ENCODE measurements at regions of chr11 and their contacts with region 1.

Region 1: GRCh38 chr11:92286709-92287108 is 62.1 kb downstream of the FAT3 start:
- DNase-seq: no peak
- ATAC-seq: no peak
- H3K4me3 ChIP-seq: no peak overlapping the region
- H3K27ac ChIP-seq: no peak overlapping the region
- H3K4me1 ChIP-seq: no peaks in the 10 kb centered on the region
- H3K27me3 ChIP-seq: peaks cover 11% of the 10 kb centered on the region; the same call in 1 of the 2 replicates
- CTCF ChIP-seq: no peak

Region 2: DNA sequence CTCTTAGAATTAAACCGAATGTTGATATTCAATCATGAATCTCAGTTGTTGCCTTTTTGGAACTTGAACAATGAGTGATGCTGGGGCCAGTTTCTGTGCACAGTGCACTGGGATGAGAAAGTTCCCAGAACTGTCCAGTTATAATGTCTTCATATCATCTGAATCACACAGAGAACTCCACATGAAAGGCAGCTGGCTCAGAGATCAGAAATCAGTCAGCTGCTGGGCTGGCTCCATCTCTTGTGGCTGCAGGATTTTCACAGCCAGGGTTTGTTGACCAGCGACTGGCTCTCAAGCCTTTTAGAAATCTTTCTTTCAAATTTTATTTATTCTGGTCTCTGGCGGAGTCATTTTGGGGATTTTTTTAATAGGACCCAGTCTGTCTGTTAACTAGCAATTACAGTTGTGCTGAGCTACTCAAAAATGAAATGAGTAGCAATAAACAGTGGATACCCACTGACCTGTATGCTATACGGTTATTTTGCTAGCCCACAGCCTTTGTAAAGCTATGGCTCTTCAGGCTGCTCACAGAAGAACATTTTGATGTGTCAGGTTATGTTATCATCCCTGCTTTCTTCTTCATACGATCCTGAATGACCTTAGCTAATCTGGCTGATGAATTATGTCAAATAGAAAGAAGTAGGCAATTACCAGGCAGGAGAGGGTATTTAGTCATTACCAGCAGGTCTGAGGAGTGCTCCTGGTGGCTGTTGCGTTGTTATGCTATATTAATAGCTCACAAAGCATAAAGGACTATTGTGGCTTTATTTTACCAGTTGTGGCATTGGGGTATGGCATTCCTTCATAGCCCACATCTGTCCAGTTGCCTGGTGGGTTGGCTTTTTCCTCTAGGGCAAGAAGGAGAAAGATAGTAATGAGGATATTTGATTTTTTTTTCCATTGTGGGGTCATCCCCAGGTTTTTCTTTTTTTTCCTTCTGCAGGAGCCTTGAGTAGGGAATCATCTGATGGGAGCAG is 58.5 kb before region 1 on chr11:
- CTCF ChIA-PET with region 1: no interaction called
- POLR2A ChIA-PET with region 1: interaction called, 17 read pairs
- intact Hi-C with region 1: no loop called
- DNase-seq: no peak
- ATAC-seq: no peak
- H3K4me3 ChIP-seq: no peak overlapping the region
- H3K27ac ChIP-seq: no peak overlapping the region
- H3K4me1 ChIP-seq: no peaks in the 10 kb centered on the region
- H3K27me3 ChIP-seq: peaks cover 46% of the 10 kb centered on the region
- CTCF ChIP-seq: no peak

Measured in PC-3 (cell line).